ENCODE measurements at regions of chr9 and their contacts with region 1.

Region 1: DNA sequence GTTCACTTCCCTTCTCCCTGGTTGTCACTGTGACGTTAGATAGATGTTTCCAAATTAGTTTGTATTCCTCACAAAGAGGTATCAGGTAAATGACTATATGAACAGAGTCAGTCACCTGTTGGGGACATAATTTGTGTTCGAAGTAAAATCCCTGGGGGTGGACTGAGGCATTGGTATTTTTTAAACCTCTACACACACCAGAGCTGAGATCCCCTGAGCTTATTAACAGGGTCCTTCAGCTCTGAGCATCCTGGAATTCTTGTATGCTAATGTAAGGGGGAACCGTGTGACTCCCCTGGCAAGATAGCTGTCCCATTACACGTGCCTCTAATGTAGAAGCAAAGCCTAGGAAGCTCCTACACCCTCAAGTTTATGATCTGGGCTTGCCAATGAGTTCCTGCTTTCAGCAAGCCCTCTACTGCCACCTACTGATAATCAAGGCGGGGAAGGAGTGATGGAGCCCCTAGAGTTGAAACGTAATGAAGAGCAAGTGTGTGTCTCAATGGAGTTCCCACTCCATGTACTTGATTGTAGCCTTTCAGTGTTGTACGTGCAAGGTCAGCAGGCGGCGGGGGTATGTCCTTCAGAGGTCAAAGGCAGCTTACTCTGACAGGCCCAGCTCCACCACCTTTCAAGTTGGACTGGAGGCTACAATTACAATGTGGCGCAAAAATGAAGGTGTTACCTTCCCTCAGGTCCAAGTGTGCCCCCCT is 14.4 kb downstream of the PRKACG start:
- DNase-seq: peak; percentile 72 to 90 (median 80)
- H3K4me3 ChIP-seq: no peak overlapping the region
- H3K27ac ChIP-seq: no peak overlapping the region
- H3K4me1 ChIP-seq: no peaks in the 10 kb centered on the region
- H3K27me3 ChIP-seq: no peaks in the 10 kb centered on the region
- CTCF ChIP-seq: peak; percentile 74 to 87 (median 82)
- POLR2A ChIP-seq: no peak

Region 2: DNA sequence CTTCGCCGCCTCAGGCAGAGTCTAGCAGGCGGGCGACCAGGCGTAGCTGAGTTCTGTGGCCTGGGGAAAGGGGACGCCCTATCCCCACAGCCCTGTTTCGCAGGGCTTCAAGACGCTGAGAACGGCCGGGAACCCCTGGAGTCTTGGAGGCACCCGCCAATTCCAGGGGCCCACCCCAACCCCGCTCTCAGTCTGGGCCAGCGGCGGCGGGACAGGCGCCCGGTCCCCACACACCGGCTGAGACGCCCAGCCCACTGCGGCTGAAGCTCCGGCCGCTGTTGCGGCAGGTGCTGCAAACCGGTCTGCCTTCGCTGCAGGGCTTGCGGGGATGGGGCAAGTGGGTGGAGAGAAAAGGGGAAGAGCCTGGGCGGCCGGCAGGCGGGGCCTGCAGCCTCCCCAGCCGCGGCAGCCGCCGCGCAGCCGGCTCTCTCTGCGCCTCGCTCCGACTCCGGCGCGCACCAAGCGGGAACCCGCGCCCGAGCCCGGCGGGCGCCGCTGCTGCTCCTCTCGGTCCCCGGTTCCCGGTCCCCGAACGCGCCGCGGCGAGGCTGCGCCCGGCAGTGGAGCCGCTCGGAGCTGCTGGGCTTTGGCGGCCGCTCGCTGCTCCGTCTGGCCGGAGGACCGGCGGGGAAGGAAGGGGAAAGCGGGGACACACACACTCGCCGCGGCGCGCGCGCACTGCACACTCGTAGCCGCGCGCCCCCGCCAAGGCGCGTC is 294.6 kb before region 1 on chr9 and contains the start of gene PIP5K1B:
- intact Hi-C with region 1: loop called in 1 of 2 experiments (anchors 10 kb)
- DNase-seq: peak; percentile 78 to 88 (median 83)
- H3K4me3 ChIP-seq: peak within 1 kb of the TSS; percentile 16 to 94 (median 37)
- H3K27ac ChIP-seq: peak within 1 kb of the TSS in 4 of 5 donors; percentile 52 to 93 (median 85)
- H3K4me1 ChIP-seq: peaks cover 9 to 11% of the 10 kb centered on the region in 2 donors
- H3K27me3 ChIP-seq: no peaks in the 10 kb centered on the region
- CTCF ChIP-seq: peak in 2 of 6 experiments; percentile 13 to 35
- POLR2A ChIP-seq: peak; percentile 58 to 95
- total RNA-seq, gene PIP5K1B: 4.9 to 24.0 (median 10.0) TPM

Region 3: GRCh38 chr9:68933434-68934328 is 65.9 kb before region 1 on chr9:
- intact Hi-C with region 1: loop called (anchors 10 kb)
- DNase-seq: no peak
- H3K4me3 ChIP-seq: no peak overlapping the region
- H3K27ac ChIP-seq: peak overlapping the region in 2 of 5 donors; percentile 16 to 41
- H3K4me1 ChIP-seq: peaks cover 0 to 13% of the 10 kb centered on the region in 2 donors
- H3K27me3 ChIP-seq: no peaks in the 10 kb centered on the region
- CTCF ChIP-seq: no peak
- POLR2A ChIP-seq: no peak